Activated naive CD4-positive, alpha-beta T cell treated with anti-CD3 and anti-CD28 coated beads for 36 hours (primary cell): ENCODE measurements at regions of chr5 and their contacts with region 1.

Region 1: GRCh38 chr5:179821581-179822432 is 1.1 kb downstream of the SQSTM1 start:
- DNase-seq: peak; percentile 92
- H3K4me3 Mint-ChIP-seq: peak overlapping the region; percentile 88
- H3K27ac Mint-ChIP-seq: peak overlapping the region; percentile 92
- H3K4me1 Mint-ChIP-seq: peaks cover 49% of the 10 kb centered on the region
- H3K27me3 Mint-ChIP-seq: peaks cover 4% of the 10 kb centered on the region

Region 2: GRCh38 chr5:179550511-179551230 is 271.1 kb before region 1 on chr5 and contains the start of gene RUFY1:
- CTCF ChIA-PET with region 1: no interaction called
- intact Hi-C with region 1: loop called (anchors 2 kb)
- DNase-seq: peak; percentile 77
- H3K4me3 Mint-ChIP-seq: peak within 1 kb of the TSS; percentile 97
- H3K27ac Mint-ChIP-seq: peak within 1 kb of the TSS; percentile 98
- H3K4me1 Mint-ChIP-seq: peaks cover 33% of the 10 kb centered on the region
- H3K27me3 Mint-ChIP-seq: no peaks in the 10 kb centered on the region
- total RNA-seq, gene RUFY1: 27.8 to 31.0 TPM

Region 3: DNA sequence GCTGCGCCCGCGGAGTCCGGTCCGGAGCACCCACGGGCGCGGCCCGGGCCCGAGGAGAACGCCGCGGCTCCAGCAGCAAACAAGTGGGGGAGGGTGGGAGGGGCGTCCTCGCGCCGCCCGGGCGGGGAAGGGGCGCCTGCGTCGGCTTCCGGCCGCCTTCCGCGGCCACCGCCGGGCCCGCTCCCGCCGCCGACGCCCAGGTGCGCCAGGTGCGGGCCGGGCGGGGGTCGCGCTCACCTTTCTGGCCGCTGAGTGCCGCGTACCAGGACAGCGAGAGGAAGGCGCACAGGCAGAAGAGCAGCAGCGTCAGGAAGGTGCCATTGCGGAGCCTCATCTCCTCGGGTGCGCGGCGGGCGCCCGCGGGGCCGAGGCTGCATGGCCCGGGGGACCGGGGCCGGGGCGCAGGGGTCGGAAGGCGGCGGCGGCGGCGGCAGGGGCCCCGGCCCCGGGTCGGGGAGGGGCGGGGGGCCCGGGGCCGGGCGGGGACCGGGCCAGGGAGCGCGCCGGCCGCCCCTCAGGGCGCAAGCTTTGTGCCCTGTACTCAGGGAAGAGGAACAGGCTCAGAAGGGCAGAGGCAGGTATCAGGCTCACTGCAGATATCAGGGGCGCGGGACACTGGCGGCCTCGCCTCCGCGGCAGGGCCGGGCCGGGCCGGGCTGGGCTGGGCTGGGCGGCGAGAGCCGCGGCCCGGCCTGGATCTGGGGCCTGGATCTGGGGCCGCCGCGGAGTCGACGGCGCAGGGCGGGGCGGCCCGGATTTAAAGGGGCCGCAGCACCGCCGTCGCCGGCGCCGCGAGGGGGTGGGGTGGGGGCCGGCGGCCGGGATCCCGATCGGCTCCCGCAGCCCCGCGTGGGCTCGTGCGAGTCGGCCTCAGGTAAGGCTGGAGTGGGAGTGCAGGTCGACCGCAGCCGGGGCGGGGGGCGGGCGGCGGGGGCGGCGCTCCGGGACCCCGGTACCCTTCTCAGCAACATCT is 15.3 kb before region 1 on chr5 and contains the start of gene MGAT4B:
- CTCF ChIA-PET with region 1: interaction called, 9 read pairs
- intact Hi-C with region 1: loop called (anchors 1 kb)
- DNase-seq: peak; percentile 62
- H3K4me3 Mint-ChIP-seq: peak within 1 kb of the TSS; percentile 84
- H3K27ac Mint-ChIP-seq: no peak within 1 kb of the TSS
- H3K4me1 Mint-ChIP-seq: peaks cover 38% of the 10 kb centered on the region
- H3K27me3 Mint-ChIP-seq: no peaks in the 10 kb centered on the region
- total RNA-seq, gene MGAT4B: 57.7 to 59.9 TPM

Region 4: DNA sequence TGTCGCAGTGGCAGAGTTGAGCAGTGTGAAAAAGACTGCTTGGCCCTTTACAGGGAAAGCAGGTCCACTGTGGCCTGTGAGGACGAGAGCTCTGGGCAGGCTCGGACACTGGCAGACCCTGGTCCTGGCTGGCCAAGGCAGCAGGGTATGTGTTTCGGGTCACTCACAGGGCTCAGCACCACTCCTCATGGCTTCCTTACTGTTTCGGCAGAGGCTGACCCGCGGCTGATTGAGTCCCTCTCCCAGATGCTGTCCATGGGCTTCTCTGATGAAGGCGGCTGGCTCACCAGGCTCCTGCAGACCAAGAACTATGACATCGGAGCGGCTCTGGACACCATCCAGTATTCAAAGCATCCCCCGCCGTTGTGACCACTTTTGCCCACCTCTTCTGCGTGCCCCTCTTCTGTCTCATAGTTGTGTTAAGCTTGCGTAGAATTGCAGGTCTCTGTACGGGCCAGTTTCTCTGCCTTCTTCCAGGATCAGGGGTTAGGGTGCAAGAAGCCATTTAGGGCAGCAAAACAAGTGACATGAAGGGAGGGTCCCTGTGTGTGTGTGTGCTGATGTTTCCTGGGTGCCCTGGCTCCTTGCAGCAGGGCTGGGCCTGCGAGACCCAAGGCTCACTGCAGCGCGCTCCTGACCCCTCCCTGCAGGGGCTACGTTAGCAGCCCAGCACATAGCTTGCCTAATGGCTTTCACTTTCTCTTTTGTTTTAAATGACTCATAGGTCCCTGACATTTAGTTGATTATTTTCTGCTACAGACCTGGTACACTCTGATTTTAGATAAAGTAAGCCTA is 14.6 kb after region 1 on chr5:
- CTCF ChIA-PET with region 1: interaction called, 9 read pairs
- intact Hi-C with region 1: loop called (anchors 1 kb)
- DNase-seq: peak; percentile 79
- H3K4me3 Mint-ChIP-seq: peak overlapping the region; percentile 9
- H3K27ac Mint-ChIP-seq: peak overlapping the region; percentile 77
- H3K4me1 Mint-ChIP-seq: peaks cover 17% of the 10 kb centered on the region
- H3K27me3 Mint-ChIP-seq: no peaks in the 10 kb centered on the region

Region 5: GRCh38 chr5:179858586-179859427 is 37.0 kb after region 1 on chr5 and contains the start of gene MRNIP:
- CTCF ChIA-PET with region 1: no interaction called
- intact Hi-C with region 1: loop called (anchors 1 kb)
- DNase-seq: peak; percentile 93
- H3K4me3 Mint-ChIP-seq: peak within 1 kb of the TSS; percentile 93
- H3K27ac Mint-ChIP-seq: peak within 1 kb of the TSS; percentile 82
- H3K4me1 Mint-ChIP-seq: peaks cover 14% of the 10 kb centered on the region
- H3K27me3 Mint-ChIP-seq: no peaks in the 10 kb centered on the region
- total RNA-seq, gene MRNIP: 16.2 to 16.3 TPM

Region 6: DNA sequence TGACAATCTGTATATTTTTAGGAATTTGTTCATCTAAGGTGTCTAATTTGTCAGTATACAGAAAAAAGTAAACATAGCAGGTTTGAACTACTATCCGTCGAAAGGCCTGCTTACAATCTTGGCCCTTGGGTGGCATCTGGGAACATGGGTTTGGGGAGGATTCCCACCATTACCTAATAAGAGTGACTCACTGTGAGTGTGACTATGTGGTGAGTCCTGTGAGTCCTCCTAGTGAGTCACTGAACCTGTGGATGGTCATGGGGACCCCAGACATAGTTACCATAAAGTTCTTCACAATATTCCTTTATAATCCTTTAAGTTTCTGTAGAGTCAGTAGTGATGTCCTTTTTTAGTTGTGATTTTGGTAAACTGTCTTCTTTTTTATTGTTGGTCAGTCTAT is 212.8 kb after region 1 on chr5:
- CTCF ChIA-PET with region 1: no interaction called
- intact Hi-C with region 1: no loop called
- DNase-seq: no peak
- H3K4me3 Mint-ChIP-seq: no peak overlapping the region
- H3K27ac Mint-ChIP-seq: no peak overlapping the region
- H3K4me1 Mint-ChIP-seq: no peaks in the 10 kb centered on the region
- H3K27me3 Mint-ChIP-seq: no peaks in the 10 kb centered on the region